ENCODE measurements at regions of chr10 and their contacts with region 1.

Region 1: GRCh38 chr10:126663328-126663727 is 7.2 kb downstream of the C10orf90 start:
- DNase-seq: peak; percentile 31 to 43
- ATAC-seq: peak; percentile 62 to 82
- H3K4me3 ChIP-seq: no peak overlapping the region
- H3K27ac ChIP-seq: peak overlapping the region in 2 of 4 donors; percentile 31 to 46
- H3K4me1 ChIP-seq: no peaks in the 10 kb centered on the region
- H3K27me3 ChIP-seq: peaks cover 0 to 2% (median 0%) of the 10 kb centered on the region in 3 donors
- CTCF ChIP-seq: no peak
- POLR2A ChIP-seq: peak in 1 of 2 donors; percentile 21

Region 2: DNA sequence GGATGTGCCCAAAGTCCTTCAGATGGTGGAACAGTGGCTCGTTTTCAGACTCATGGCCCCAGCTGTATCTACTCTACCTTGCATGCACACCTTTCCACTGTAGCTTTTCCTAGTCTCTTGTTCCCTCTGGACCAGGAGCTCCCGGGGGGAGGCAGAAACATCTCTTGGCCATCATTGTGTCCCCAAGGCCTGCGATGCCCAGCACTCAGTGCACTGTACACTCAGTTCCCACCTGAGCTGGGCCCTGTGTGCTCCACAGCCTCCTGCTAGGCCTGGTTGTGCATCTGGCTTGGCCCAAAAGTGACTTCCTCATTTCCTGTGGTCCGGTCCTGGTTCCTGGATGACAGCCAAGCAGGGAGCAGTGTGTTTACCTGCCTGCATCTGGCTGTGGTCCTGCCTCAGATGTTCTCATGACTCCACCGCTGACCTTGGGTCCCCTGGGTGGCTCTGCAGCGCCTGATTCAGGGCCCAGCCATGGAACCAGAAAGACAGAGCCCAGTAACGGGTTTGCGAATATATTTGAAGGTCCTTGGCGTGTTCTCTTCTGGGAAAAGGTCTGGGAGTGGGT is 232.0 kb after region 1 on chr10:
- in situ Hi-C with region 1: loop called in 1 of 4 experiments (anchors 10 kb)
- intact Hi-C with region 1: no loop called
- DNase-seq: no peak
- ATAC-seq: no peak
- H3K4me3 ChIP-seq: no peak overlapping the region
- H3K27ac ChIP-seq: no peak overlapping the region
- H3K4me1 ChIP-seq: no peaks in the 10 kb centered on the region
- H3K27me3 ChIP-seq: no peaks in the 10 kb centered on the region
- CTCF ChIP-seq: no peak
- POLR2A ChIP-seq: no peak